ENCODE measurements at regions of chr19 and their contacts with region 1.

Region 1: DNA sequence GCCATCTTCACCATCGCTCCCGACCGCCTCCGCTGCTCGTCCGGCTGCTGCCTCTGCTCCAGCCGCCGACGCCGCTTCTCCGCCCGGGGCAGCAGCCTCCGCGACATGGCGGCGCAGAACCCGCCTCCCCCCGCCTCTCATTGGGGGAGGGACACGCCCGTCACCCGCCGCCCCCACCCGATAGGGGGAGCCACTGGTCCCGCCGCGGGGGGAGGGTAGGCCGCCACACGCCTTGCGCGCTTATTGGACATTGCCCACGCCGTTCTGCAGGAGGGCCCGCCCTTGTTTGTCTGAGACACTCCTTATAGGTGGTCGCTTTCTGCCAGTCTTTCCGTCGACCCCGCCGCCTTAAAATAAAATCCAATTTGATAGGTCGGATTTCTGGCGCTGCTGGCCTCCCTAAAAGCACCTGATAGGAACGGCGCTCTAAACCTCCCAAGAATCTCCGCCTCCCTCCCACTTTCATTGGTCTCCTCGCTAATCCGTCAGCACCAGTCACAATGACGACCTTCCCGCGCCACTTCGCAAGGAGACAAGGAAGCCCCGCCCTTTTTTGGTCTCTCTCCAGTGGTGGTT is at the start of gene HNRNPL:
- DNase-seq: peak; percentile 99
- ATAC-seq: peak; percentile 81
- total RNA-seq, gene HNRNPL: 184 TPM

Region 2: GRCh38 chr19:38635483-38636399 is 214.2 kb before region 1 on chr19:
- intact Hi-C with region 1: no loop called
- DNase-seq: no peak
- ATAC-seq: no peak

Region 3: DNA sequence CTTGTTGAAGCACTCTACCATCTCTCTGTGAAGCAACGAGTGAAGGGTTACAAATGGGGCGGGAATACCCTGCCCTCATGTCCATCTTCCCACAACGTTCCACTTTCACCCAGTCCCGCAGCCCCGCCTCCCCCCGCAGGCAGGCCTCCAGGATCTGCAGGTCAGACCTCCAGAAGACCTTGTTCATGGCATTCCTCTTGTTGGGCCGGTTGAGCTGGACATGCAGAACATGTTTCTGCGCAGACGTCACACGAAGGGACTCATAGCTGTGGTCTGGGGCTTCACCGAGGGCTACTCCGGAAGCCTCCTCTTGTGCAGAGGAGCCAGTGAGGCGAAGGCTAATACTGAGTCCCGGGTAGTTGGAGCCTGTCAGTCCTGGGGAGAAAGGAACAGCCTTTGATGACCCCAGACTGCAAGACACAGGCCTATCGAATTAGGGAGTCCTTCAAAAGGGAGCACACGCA is 18.8 kb before region 1 on chr19:
- intact Hi-C with region 1: loop called (anchors 1 kb)
- DNase-seq: peak; percentile 86
- ATAC-seq: peak; percentile 67

Region 4: DNA sequence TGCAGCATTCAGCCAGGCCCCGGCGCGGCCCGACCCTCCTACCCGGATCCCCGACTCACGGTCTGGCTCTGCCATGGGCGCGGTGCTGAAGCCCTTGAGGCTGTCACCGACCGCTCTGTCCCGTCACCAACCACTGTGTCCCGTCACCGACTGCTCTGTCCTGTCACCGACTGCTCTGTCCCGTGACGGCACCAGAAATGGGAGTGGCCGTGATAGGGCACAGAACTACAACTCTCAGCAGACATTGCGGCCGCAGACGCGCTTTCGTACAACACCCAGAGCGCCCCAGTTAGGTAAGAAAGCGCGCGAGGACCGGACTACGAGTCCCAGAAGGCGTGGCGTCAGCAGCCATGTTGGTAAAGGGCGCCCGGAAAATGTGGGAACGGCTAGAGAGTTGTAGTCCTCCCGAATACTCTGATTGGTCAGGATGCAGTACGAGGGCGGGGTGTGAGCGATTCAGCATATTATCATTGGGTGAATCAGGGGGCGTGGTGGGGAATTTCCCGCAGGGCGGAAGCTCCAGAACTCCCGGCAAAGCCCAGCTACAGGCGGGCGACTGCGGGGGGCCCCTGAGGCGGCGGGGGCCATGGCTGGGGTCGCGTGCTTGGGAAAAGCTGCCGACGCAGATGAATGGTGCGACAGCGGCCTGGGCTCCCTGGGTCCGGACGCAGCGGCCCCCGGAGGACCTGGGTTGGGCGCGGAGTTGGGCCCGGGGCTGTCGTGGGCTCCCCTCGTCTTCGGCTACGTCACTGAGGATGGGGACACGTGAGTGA is 49.7 kb after region 1 on chr19 and contains the starts of genes NFKBIB and SIRT2:
- intact Hi-C with region 1: loop called (anchors 1 kb)
- DNase-seq: peak; percentile 100
- ATAC-seq: peak; percentile 99
- total RNA-seq, gene NFKBIB: 17.9 TPM
- total RNA-seq, gene SIRT2: 99.8 TPM

Region 5: GRCh38 chr19:39070888-39071287 is 220.9 kb after region 1 on chr19:
- intact Hi-C with region 1: no loop called
- DNase-seq: no peak
- ATAC-seq: no peak

Region 6: DNA sequence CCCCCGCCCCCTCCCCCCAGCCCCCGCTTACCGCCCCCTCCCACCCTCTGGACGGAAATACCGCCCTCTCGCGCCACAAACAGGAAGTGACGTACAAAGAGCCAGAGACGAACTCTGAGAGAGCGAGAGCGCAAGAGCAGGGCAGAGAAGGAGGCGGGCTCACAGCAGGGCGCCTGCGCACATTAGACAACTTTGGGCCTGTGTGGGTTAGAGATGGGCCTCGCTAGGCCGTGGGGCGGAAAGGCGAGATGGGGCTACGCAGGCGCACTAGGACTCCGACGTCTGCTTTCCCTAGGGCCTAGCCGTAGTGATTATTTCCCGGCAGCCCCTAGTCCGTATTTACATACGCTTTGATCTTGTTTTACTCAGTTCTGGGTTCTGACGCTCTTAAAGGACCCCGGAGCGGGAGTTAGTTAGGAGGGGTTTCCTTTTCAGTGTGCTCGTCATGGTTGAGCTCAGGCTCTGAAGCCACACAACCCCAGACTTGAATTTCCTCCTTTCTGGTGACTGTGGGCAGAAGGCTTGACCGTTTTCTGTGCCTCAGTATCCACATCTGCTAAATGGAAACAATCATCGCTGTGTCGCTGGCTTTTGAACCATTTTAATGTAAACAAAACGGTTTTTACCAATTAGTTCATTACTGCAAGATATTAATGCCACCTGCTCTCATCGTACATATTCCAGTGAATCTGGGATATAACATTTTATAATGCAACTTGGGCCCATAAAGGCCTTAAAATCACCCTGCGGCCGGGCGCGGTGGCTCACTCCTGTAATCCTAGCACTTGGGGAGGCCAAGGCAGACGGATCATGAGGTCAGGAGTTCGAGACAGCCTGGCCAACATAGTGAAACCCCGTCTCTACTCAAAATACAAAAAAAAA is 1435.6 kb after region 1 on chr19:
- intact Hi-C with region 1: loop called (anchors 10 kb)
- DNase-seq: peak; percentile 98
- ATAC-seq: peak; percentile 97

Measured in Right ventricle myocardium inferior (tissue), 1 donor.